ENCODE measurements at regions of chr14 and their contacts with region 1.

Region 1: GRCh38 chr14:100108042-100108825 is 43.0 kb downstream of the EVL start:
- DNase-seq: peak; percentile 94
- ATAC-seq: peak; percentile 53
- H3K4me3 Mint-ChIP-seq: no peak overlapping the region
- H3K27ac Mint-ChIP-seq: peak overlapping the region; percentile 92
- H3K4me1 Mint-ChIP-seq: peaks cover 74% of the 10 kb centered on the region
- H3K27me3 Mint-ChIP-seq: no peaks in the 10 kb centered on the region

Region 2: DNA sequence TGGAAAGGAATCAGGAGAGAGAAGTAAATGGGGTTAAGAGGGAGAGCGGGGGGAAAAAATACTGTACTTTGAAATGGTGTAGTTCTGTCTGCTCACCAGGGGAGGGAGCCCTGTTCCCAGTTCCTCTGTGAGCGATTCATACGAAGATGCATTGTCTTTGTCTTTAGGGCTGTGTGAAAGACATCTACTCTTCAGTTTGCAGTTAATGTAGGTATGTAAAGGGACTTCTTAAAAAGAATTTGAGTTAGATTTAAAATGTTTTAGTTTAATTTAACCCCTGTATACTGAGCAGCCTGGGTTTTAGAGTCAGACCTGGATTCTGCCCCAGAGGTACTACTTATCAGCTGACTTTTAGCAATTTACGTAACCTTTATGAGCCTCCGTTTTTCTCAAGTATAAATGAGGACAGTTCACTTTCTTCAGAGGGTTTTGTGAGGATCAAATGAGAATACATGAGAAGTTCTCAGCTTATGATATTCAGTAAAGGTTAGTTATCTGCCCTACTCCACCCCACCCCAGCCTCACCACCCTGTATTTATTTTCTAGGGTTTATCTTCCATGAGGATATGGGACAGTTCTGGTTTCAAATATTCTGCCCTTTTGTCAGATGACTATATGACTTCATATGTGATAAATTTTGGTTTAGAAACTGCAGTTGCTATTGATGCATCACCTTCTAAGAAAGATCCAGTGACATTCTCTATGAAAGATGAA is 125.5 kb before region 1 on chr14:
- CTCF ChIA-PET with region 1: interaction called, 73 read pairs
- POLR2A ChIA-PET with region 1: no interaction called
- intact Hi-C with region 1: loop called (anchors 1 kb)
- DNase-seq: peak; percentile 77
- ATAC-seq: peak; percentile 94
- H3K4me3 Mint-ChIP-seq: no peak overlapping the region
- H3K27ac Mint-ChIP-seq: peak overlapping the region; percentile 9
- H3K4me1 Mint-ChIP-seq: peaks cover 14% of the 10 kb centered on the region
- H3K27me3 Mint-ChIP-seq: no peaks in the 10 kb centered on the region

Region 3: GRCh38 chr14:100056964-100057795 is 51.1 kb before region 1 on chr14:
- CTCF ChIA-PET with region 1: interaction called, 41 read pairs
- POLR2A ChIA-PET with region 1: no interaction called
- intact Hi-C with region 1: loop called (anchors 1 kb)
- DNase-seq: peak; percentile 24
- ATAC-seq: peak; percentile 37
- H3K4me3 Mint-ChIP-seq: peak overlapping the region; percentile 18
- H3K27ac Mint-ChIP-seq: peak overlapping the region; percentile 81
- H3K4me1 Mint-ChIP-seq: peaks cover 58% of the 10 kb centered on the region
- H3K27me3 Mint-ChIP-seq: no peaks in the 10 kb centered on the region

Region 4: GRCh38 chr14:100062590-100062989 is 45.6 kb before region 1 on chr14:
- CTCF ChIA-PET with region 1: interaction called, 41 read pairs
- POLR2A ChIA-PET with region 1: interaction called, 162 read pairs
- intact Hi-C with region 1: loop called (anchors 1 kb)
- DNase-seq: peak; percentile 75
- ATAC-seq: peak; percentile 37
- H3K4me3 Mint-ChIP-seq: peak overlapping the region; percentile 65
- H3K27ac Mint-ChIP-seq: peak overlapping the region; percentile 99
- H3K4me1 Mint-ChIP-seq: peaks cover 76% of the 10 kb centered on the region
- H3K27me3 Mint-ChIP-seq: no peaks in the 10 kb centered on the region

Region 5: GRCh38 chr14:100078991-100079725 is 29.1 kb before region 1 on chr14:
- CTCF ChIA-PET with region 1: interaction called, 300 read pairs
- POLR2A ChIA-PET with region 1: interaction called, 162 read pairs
- intact Hi-C with region 1: no loop called
- DNase-seq: peak; percentile 87
- ATAC-seq: peak; percentile 50
- H3K4me3 Mint-ChIP-seq: peak overlapping the region; percentile 57
- H3K27ac Mint-ChIP-seq: peak overlapping the region; percentile 91
- H3K4me1 Mint-ChIP-seq: peaks cover 97% of the 10 kb centered on the region
- H3K27me3 Mint-ChIP-seq: no peaks in the 10 kb centered on the region

Region 6: DNA sequence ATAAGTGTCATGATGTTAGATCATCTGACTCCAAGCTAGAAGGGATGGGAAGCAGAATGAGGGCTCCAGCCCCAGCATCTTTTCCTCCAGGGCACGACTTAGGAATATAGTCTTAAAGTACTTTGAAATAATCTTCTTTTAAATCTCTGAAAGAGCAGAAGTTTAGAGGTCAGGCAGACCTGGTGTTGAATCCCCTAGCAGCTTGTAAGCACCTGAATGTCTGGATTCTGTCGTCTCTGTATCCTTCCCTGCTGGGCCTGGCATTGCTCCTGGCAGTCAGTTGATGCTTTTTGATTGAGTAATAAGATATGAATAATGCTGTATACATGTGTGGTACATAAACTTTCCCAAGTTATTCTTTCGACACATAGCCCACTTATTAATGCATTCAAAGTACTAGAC is 11.7 kb before region 1 on chr14:
- CTCF ChIA-PET with region 1: interaction called, 59 read pairs
- POLR2A ChIA-PET with region 1: no interaction called
- intact Hi-C with region 1: no loop called
- DNase-seq: no peak
- ATAC-seq: no peak
- H3K4me3 Mint-ChIP-seq: no peak overlapping the region
- H3K27ac Mint-ChIP-seq: peak overlapping the region; percentile 69
- H3K4me1 Mint-ChIP-seq: peaks cover 93% of the 10 kb centered on the region
- H3K27me3 Mint-ChIP-seq: no peaks in the 10 kb centered on the region

Region 7: GRCh38 chr14:100955201-100955600 is 847.0 kb after region 1 on chr14:
- CTCF ChIA-PET with region 1: no interaction called
- POLR2A ChIA-PET with region 1: no interaction called
- intact Hi-C with region 1: no loop called
- DNase-seq: no peak
- ATAC-seq: no peak
- H3K4me3 Mint-ChIP-seq: no peak overlapping the region
- H3K27ac Mint-ChIP-seq: no peak overlapping the region
- H3K4me1 Mint-ChIP-seq: no peaks in the 10 kb centered on the region
- H3K27me3 Mint-ChIP-seq: peaks cover 6% of the 10 kb centered on the region